ENCODE measurements at regions of chr1 and their contacts with region 1.

Region 1: GRCh38 chr1:157963713-157964112 is 29.7 kb upstream of the KIRREL1 start:
- DNase-seq: peak; percentile 57 to 73
- ATAC-seq: peak; percentile 62 to 88 (median 82)
- H3K4me3 ChIP-seq: no peak overlapping the region
- H3K27ac ChIP-seq: no peak overlapping the region
- H3K4me1 ChIP-seq: peaks cover 0 to 16% (median 3%) of the 10 kb centered on the region in 9 donors
- H3K27me3 ChIP-seq: peaks cover 0 to 32% (median 17%) of the 10 kb centered on the region in 7 donors
- CTCF ChIP-seq: peak; percentile 83 to 97 (median 94)

Region 2: GRCh38 chr1:157803851-157804250 is 159.9 kb before region 1 on chr1:
- intact Hi-C with region 1: no loop called
- DNase-seq: no peak
- ATAC-seq: peak in 3 of 8 donors; percentile 38 to 57 (median 38)
- H3K4me3 ChIP-seq: no peak overlapping the region
- H3K27ac ChIP-seq: no peak overlapping the region
- H3K4me1 ChIP-seq: no peaks in the 10 kb centered on the region
- H3K27me3 ChIP-seq: no peaks in the 10 kb centered on the region
- CTCF ChIP-seq: no peak

Region 3: GRCh38 chr1:158527190-158527815 is 563.6 kb after region 1 on chr1:
- intact Hi-C with region 1: loop called in 2 of 10 experiments (anchors 5 to 10 kb)
- DNase-seq: no peak
- ATAC-seq: peak in 1 of 8 donors; percentile 16
- H3K4me3 ChIP-seq: no peak overlapping the region
- H3K27ac ChIP-seq: no peak overlapping the region
- H3K4me1 ChIP-seq: no peaks in the 10 kb centered on the region
- H3K27me3 ChIP-seq: no peaks in the 10 kb centered on the region
- CTCF ChIP-seq: peak in 7 of 9 donors; percentile 6 to 66 (median 46)

Region 4: GRCh38 chr1:158998781-158999161 is 1035.1 kb after region 1 on chr1:
- intact Hi-C with region 1: loop called in 4 of 10 experiments (anchors 5 to 10 kb)
- DNase-seq: peak; percentile 45 to 59
- ATAC-seq: peak; percentile 23 to 75 (median 55)
- H3K4me3 ChIP-seq: peak overlapping the region in 9 of 10 donors; percentile 16 to 65 (median 53)
- H3K27ac ChIP-seq: peak overlapping the region; percentile 27 to 95 (median 86)
- H3K4me1 ChIP-seq: peaks cover 0 to 40% (median 16%) of the 10 kb centered on the region in 9 donors
- H3K27me3 ChIP-seq: no peaks in the 10 kb centered on the region
- CTCF ChIP-seq: peak; percentile 76 to 96 (median 91)

Region 5: GRCh38 chr1:159009704-159010361 is 1046.1 kb after region 1 on chr1 and contains the start of gene IFI16:
- intact Hi-C with region 1: loop called in 1 of 10 experiments (anchors 10 kb)
- DNase-seq: peak in 1 of 2 donors; percentile 83
- ATAC-seq: peak; percentile 86 to 94 (median 90)
- H3K4me3 ChIP-seq: peak within 1 kb of the TSS; percentile 39 to 76 (median 59)
- H3K27ac ChIP-seq: peak within 1 kb of the TSS; percentile 69 to 96 (median 86)
- H3K4me1 ChIP-seq: peaks cover 3 to 75% (median 34%) of the 10 kb centered on the region in 9 donors
- H3K27me3 ChIP-seq: no peaks in the 10 kb centered on the region
- CTCF ChIP-seq: no peak
- total RNA-seq, gene IFI16: 16.1 to 73.8 (median 21.4) TPM

Region 6: GRCh38 chr1:159071970-159072582 is 1108.4 kb after region 1 on chr1:
- intact Hi-C with region 1: loop called in 2 of 10 experiments (anchors 10 kb)
- DNase-seq: no peak
- ATAC-seq: peak in 6 of 8 donors; percentile 62 to 74 (median 66)
- H3K4me3 ChIP-seq: no peak overlapping the region
- H3K27ac ChIP-seq: no peak overlapping the region
- H3K4me1 ChIP-seq: peaks cover 0 to 43% (median 0%) of the 10 kb centered on the region in 9 donors
- H3K27me3 ChIP-seq: no peaks in the 10 kb centered on the region
- CTCF ChIP-seq: peak; percentile 40 to 86 (median 76)